AG04450 (cell line): ENCODE measurements at regions of chr2 and their contacts with region 1.

Region 1: DNA sequence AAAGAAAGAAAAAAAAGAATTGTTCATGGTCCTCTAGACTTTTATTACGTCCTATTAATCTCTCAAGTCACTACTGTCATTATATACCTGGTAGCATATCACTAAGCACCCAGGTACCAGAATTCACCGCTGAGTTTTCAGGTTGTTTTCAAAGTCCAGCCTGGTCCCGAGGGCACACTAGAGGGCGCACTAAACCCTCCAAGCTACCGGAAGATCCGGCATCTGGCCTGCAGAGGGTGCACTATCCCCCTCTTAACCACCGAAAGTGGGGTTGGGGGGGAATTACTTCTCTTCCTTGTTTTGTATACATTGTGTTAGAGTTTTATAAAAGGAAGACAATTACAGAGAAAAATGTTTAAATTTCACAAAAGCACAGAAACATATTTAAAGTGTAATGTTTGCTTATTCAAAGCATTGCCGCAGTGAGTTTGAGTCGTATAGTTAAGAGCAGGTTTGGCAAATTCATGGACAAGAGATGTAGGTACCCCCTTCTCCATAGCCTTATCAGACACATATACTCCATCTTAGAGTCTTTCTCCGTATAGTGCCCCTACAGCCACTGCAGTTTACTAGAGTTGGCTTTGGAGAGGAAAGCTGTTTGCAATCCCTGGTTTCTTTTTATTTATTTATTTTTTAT is 19.2 kb downstream of the MOGAT1 start:
- DNase-seq: peak; percentile 56
- H3K4me3 ChIP-seq: no peak overlapping the region
- H3K27ac ChIP-seq: no peak overlapping the region
- H3K27me3 ChIP-seq: no peaks in the 10 kb centered on the region
- CTCF ChIP-seq: peak; percentile 100

Region 2: DNA sequence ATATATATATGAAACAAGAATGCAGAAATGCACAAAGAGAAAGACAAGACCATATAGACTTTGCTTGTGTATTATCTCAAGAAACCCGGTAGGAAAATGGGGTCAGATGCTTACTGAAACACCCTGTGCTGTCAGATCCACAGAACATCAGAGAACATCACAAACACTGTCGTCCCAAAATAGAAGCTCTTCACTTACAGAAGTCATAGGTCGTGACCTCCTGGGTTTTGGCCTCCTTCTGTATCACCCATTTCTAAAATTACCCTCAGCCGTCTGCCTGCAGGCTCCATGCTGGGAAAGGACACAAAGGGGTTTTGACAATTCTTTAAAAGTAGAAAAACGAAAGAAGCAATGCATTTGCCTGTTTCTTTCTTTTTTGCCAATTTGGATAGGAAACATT is 529.7 kb before region 1 on chr2:
- CTCF ChIA-PET with region 1: no interaction called
- POLR2A ChIA-PET with region 1: no interaction called
- DNase-seq: no peak
- H3K4me3 ChIP-seq: no peak overlapping the region
- H3K27ac ChIP-seq: no peak overlapping the region
- H3K27me3 ChIP-seq: no peaks in the 10 kb centered on the region
- CTCF ChIP-seq: no peak

Region 3: GRCh38 chr2:222663479-222663878 is 27.2 kb before region 1 on chr2:
- CTCF ChIA-PET with region 1: interaction called, 10 read pairs
- POLR2A ChIA-PET with region 1: no interaction called
- DNase-seq: no peak
- H3K4me3 ChIP-seq: no peak overlapping the region
- H3K27ac ChIP-seq: no peak overlapping the region
- H3K27me3 ChIP-seq: peaks cover 2% of the 10 kb centered on the region
- CTCF ChIP-seq: no peak

Region 4: GRCh38 chr2:222677981-222678380 is 12.7 kb before region 1 on chr2:
- CTCF ChIA-PET with region 1: interaction called, 20 read pairs
- POLR2A ChIA-PET with region 1: no interaction called
- DNase-seq: no peak
- H3K4me3 ChIP-seq: no peak overlapping the region
- H3K27ac ChIP-seq: no peak overlapping the region
- H3K27me3 ChIP-seq: peaks cover 5% of the 10 kb centered on the region
- CTCF ChIP-seq: peak; percentile 12; the same call in 1 of the 2 replicates

Region 5: DNA sequence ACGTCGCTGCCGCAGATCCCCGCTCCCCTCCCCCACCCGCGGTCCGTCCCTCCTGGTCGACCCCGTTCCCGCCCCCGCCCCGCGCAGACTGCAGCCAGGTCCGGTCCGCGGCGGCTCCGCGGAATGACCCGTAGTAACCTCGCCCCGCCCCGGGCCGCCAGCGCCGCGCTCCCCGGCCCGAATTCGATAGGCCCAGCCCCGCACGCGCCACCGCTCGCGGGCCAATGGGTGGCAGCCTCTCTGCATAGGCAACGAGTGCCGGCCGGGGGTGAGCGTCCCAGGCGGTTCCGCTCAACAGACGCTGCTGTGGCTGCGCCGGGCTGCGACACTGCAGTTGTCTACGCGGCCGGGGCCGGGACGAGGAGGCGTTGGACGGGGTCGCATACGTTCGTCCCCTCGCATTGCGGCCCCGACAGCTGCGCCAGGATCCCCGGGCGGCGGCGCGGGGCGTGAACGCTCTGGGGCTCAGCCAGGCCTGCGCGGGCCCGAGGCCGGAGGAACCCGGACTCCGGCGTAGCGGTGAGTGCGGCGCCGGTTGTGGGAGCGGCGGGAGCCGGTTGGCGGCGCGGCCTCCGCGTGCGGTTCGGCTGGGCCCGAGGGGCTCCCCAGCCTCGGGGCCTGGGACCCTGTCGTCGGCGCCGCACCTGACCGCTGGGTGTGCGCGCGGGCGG is 170.2 kb after region 1 on chr2 and contains the start of gene ACSL3:
- CTCF ChIA-PET with region 1: interaction called, 11 read pairs
- POLR2A ChIA-PET with region 1: no interaction called
- DNase-seq: peak; percentile 59
- H3K4me3 ChIP-seq: peak within 1 kb of the TSS; percentile 93
- H3K27ac ChIP-seq: peak within 1 kb of the TSS; percentile 49
- H3K27me3 ChIP-seq: no peaks in the 10 kb centered on the region
- CTCF ChIP-seq: no peak
- polyA plus RNA-seq, gene ACSL3: 80.9 and 88.9 TPM in 2 replicates

Region 6: DNA sequence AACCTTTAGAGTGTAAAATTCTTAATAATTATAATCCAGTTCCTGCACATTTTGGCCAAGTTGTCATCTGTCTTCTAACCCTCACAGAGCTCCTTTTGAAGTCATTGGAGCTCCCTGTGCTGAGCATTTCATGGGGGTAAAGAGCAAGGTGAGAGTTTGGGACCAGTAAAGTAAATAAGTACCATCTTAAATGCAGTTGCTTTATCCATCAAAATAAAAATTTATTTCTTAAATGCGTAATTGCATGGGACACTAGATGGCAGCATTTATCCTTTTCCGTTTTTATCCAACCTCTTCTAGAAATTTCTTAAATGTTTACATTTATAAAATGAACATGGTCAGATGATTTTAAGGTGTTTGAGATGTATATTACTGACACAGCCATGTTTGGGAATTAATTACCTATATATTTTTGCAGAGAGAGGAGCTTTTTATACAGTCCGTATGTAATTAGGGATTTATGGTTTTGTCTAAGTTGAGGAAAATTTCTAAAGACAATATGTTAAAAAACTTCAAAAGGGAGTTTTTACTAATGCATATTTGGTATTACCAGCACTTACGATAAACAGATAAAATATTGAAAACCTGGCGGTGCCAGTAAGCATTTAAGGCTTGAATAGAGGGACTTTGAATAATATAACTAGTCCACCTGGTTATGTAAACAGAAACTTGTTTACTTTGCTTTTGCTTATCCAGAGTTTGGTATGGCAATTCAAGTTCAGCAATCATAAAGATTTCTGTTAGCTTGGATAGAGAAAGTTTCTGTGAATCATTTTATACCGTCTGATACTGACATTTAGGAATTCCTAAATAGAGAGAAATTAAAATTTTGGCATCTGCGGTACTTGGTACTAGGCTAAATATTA is 224.6 kb after region 1 on chr2:
- CTCF ChIA-PET with region 1: interaction called, 14 read pairs
- POLR2A ChIA-PET with region 1: no interaction called
- DNase-seq: no peak
- H3K4me3 ChIP-seq: no peak overlapping the region
- H3K27ac ChIP-seq: no peak overlapping the region
- H3K27me3 ChIP-seq: no peaks in the 10 kb centered on the region
- CTCF ChIP-seq: peak; percentile 61

Region 7: GRCh38 chr2:222939208-222939856 is 248.7 kb after region 1 on chr2:
- CTCF ChIA-PET with region 1: interaction called, 13 read pairs
- POLR2A ChIA-PET with region 1: no interaction called
- DNase-seq: no peak
- H3K4me3 ChIP-seq: no peak overlapping the region
- H3K27ac ChIP-seq: no peak overlapping the region
- H3K27me3 ChIP-seq: no peaks in the 10 kb centered on the region
- CTCF ChIP-seq: peak; percentile 83